ENCODE measurements at regions of chr9 and their contacts with region 1.

Region 1: DNA sequence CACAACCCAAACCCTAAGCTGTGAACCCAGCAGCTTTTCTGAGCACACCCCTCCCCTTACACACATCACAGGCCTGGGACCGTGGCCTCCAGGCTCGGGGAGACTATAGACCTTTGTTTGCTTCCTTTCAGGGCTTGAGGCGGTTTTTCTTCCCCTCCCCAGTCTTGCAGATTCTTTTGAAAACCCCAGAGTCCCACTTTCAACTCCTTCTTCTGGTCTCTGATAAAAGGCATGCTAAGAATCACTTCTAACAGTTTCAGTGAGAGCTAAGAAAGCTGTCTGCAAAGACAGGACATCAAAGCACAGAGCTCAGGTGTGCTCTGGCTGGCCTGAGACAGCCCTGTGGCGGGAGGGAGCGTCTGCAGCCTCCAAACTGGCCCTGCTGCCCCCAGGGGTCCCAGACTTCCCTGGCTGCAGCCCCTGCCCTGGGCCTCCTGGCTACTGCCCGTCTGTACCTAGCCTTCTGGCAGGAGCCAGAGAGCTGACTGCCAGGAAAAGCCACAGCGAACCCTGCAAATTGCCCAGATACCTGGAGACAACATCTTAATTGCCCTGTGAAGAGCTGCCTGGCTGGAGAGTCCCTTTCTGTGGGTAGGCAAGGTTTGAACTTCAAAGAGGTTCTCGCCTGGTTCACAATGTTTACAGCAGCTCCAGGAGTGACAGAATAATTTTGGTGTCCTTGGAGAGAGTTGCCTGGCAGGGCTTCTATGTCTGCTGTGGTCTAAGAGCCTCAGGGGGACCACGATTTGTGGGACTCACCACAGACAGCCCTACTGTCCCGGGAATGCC is 139.0 kb downstream of the GADD45G start:
- DNase-seq: peak; percentile 81
- ATAC-seq: peak; percentile 82
- H3K4me3 Mint-ChIP-seq: peak overlapping the region; percentile 76
- H3K27ac Mint-ChIP-seq: peak overlapping the region; percentile 93
- H3K4me1 Mint-ChIP-seq: peaks cover 64% of the 10 kb centered on the region
- H3K27me3 Mint-ChIP-seq: no peaks in the 10 kb centered on the region

Region 2: GRCh38 chr9:89602978-89603766 is 140.6 kb before region 1 on chr9:
- POLR2A ChIA-PET with region 1: interaction called, 44 read pairs
- DNase-seq: peak; percentile 94
- ATAC-seq: peak; percentile 25
- H3K4me3 Mint-ChIP-seq: peak overlapping the region; percentile 89
- H3K27ac Mint-ChIP-seq: peak overlapping the region; percentile 67
- H3K4me1 Mint-ChIP-seq: peaks cover 21% of the 10 kb centered on the region
- H3K27me3 Mint-ChIP-seq: peaks cover 17% of the 10 kb centered on the region

Region 3: DNA sequence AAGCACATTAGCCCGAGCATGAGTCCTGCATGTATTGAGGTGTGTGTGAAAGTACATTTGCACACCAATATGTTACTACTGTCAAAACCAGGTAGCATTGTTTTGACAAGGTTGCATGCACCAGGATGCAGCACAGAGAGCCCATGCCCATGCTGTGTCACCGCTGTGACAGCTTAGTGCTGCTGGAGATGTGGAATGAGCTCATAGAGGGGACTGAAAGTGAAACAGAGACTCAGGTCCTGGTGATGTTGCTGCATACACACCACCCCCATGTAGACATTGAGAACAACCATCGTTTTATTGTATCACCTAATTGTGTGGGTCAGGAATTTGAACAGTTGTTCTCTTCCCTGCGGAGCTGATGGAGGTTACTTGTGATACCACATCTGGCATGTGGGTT is 86.0 kb before region 1 on chr9:
- POLR2A ChIA-PET with region 1: interaction called, 11 read pairs
- DNase-seq: no peak
- ATAC-seq: peak; percentile 96
- H3K4me3 Mint-ChIP-seq: peak overlapping the region; percentile 36
- H3K27ac Mint-ChIP-seq: peak overlapping the region; percentile 49
- H3K4me1 Mint-ChIP-seq: peaks cover 34% of the 10 kb centered on the region
- H3K27me3 Mint-ChIP-seq: peaks cover 23% of the 10 kb centered on the region

Region 4: DNA sequence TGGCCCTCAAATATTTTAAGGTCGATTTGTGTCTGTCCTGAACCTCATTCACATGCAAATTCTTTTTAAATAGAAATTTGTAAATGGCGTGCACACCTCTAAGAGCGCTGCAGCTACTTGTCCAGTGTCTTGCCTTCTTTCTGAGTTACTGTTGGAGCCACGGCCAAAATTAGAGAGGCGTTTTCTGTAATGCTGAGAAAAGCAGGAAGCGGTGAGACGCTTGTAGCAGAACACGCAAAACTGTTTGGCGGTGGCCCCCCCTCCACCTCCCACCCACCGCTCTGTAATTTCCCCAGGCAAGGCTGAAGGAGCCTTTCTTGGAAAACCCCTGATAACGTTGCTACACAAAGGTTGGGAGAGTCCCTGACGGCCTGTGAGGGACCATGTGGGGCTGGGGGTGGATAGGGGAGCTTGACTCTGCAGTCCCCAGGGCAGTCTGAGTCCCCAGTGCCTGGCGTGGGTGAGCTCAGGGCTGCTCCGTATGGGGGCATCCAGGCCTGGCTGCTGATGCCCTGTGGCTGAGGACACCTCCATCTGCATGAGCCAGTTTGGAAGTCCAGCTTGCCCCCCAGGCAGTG is 42.5 kb before region 1 on chr9:
- POLR2A ChIA-PET with region 1: interaction called, 50 read pairs
- DNase-seq: peak; percentile 68
- ATAC-seq: peak; percentile 84
- H3K4me3 Mint-ChIP-seq: peak overlapping the region; percentile 90
- H3K27ac Mint-ChIP-seq: peak overlapping the region; percentile 90
- H3K4me1 Mint-ChIP-seq: peaks cover 60% of the 10 kb centered on the region
- H3K27me3 Mint-ChIP-seq: no peaks in the 10 kb centered on the region

Region 5: DNA sequence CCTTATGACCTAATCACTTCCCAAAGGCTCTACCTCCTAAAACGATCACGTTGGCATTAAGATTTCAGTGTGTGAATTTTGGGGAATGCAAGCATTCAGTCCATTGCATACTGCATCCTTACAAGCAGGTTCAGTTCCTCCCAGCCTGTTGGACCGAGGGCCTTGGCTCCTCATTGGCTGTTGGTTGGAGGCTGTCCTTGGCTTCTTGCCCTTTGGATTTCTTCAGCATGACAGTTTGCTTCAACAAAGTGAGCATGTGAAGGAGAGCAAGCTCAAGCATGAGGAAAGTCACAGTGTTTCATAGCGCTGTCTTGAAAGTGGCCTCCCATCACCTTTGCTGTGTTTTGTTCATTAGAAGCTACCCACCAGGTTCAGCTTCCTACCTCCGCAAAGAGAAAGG is 29.4 kb before region 1 on chr9:
- POLR2A ChIA-PET with region 1: interaction called, 21 read pairs
- DNase-seq: no peak
- ATAC-seq: no peak
- H3K4me3 Mint-ChIP-seq: peak overlapping the region; percentile 3
- H3K27ac Mint-ChIP-seq: peak overlapping the region; percentile 86
- H3K4me1 Mint-ChIP-seq: peaks cover 57% of the 10 kb centered on the region
- H3K27me3 Mint-ChIP-seq: no peaks in the 10 kb centered on the region

Region 6: GRCh38 chr9:89825669-89826068 is 81.9 kb after region 1 on chr9:
- POLR2A ChIA-PET with region 1: interaction called, 11 read pairs
- DNase-seq: no peak
- ATAC-seq: no peak
- H3K4me3 Mint-ChIP-seq: no peak overlapping the region
- H3K27ac Mint-ChIP-seq: no peak overlapping the region
- H3K4me1 Mint-ChIP-seq: peaks cover 31% of the 10 kb centered on the region
- H3K27me3 Mint-ChIP-seq: peaks cover 3% of the 10 kb centered on the region